CD4-positive, alpha-beta T cell (primary cell): ENCODE measurements at regions of chr20 and their contacts with region 1.

Region 1: GRCh38 chr20:32387252-32387651 is 29.1 kb downstream of the ASXL1 start:
- DNase-seq: peak in 8 of 14 experiments; percentile 4 to 86 (median 50)
- ATAC-seq: peak; percentile 96
- H3K4me3 ChIP-seq: no peak overlapping the region
- H3K4me3 Mint-ChIP-seq: peak overlapping the region; percentile 36
- H3K27ac ChIP-seq: peak overlapping the region in 1 of 2 donors; percentile 15
- H3K27ac Mint-ChIP-seq: peak overlapping the region; percentile 82
- H3K4me1 ChIP-seq: peaks cover 32% of the 10 kb centered on the region
- H3K4me1 Mint-ChIP-seq: peaks cover 82% of the 10 kb centered on the region
- H3K27me3 ChIP-seq: no peaks in the 10 kb centered on the region
- H3K27me3 Mint-ChIP-seq: no peaks in the 10 kb centered on the region
- CTCF ChIP-seq: no peak

Region 2: DNA sequence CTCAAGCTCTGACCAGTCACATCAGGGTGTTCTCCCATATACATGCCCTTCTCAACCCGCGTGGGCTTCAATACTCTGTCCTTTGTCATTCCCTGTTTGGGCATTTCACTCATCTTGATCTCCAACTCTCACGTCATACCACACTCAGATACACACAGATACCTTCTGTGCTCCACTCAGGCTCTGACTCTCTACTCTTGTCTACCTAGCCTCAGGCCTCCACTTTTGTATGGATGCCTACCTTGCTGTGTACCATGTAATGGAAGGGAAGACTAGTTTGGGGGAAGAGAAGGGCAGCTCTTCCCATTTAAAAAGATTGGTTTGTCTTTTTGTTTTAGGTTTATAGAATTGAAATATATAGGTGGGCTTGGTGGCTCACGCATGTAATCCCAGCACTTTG is 19.4 kb after region 1 on chr20:
- CTCF ChIA-PET with region 1: no interaction called
- POLR2A ChIA-PET with region 1: interaction called, 3 read pairs
- intact Hi-C with region 1: loop called in 1 of 2 experiments (anchors 1 kb)
- DNase-seq: no peak
- ATAC-seq: no peak
- H3K4me3 ChIP-seq: no peak overlapping the region
- H3K4me3 Mint-ChIP-seq: peak overlapping the region; percentile 1
- H3K27ac ChIP-seq: peak overlapping the region; percentile 7 to 43
- H3K27ac Mint-ChIP-seq: peak overlapping the region; percentile 83
- H3K4me1 ChIP-seq: peaks cover 35% of the 10 kb centered on the region
- H3K4me1 Mint-ChIP-seq: peaks cover 73% of the 10 kb centered on the region
- H3K27me3 ChIP-seq: no peaks in the 10 kb centered on the region
- H3K27me3 Mint-ChIP-seq: no peaks in the 10 kb centered on the region
- CTCF ChIP-seq: no peak

Region 3: DNA sequence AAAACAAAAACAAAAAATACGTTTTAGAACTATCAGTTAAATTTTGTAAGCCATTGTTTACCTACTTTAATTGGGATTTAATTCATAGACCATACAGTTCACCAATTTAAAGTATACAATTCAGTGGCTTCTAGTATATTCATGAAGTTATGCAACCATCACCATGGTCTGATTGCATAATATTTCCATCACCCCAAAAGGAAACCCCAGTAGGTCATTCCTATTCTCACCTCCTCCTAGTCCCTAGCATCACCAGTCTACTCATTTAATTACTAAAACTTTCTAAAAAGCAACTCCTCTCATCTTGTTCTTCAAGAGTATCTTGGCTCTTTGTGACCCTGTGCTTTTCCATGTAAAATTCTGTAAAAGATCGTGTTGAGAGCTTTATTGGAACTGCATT is 31.1 kb after region 1 on chr20:
- CTCF ChIA-PET with region 1: no interaction called
- POLR2A ChIA-PET with region 1: interaction called, 4 read pairs
- intact Hi-C with region 1: loop called in 1 of 2 experiments (anchors 5 kb)
- DNase-seq: no peak
- ATAC-seq: no peak
- H3K4me3 ChIP-seq: no peak overlapping the region
- H3K4me3 Mint-ChIP-seq: peak overlapping the region; percentile 17
- H3K27ac ChIP-seq: no peak overlapping the region
- H3K27ac Mint-ChIP-seq: peak overlapping the region; percentile 4
- H3K4me1 ChIP-seq: peaks cover 14% of the 10 kb centered on the region
- H3K4me1 Mint-ChIP-seq: peaks cover 60% of the 10 kb centered on the region
- H3K27me3 ChIP-seq: no peaks in the 10 kb centered on the region
- H3K27me3 Mint-ChIP-seq: no peaks in the 10 kb centered on the region
- CTCF ChIP-seq: no peak

Region 4: DNA sequence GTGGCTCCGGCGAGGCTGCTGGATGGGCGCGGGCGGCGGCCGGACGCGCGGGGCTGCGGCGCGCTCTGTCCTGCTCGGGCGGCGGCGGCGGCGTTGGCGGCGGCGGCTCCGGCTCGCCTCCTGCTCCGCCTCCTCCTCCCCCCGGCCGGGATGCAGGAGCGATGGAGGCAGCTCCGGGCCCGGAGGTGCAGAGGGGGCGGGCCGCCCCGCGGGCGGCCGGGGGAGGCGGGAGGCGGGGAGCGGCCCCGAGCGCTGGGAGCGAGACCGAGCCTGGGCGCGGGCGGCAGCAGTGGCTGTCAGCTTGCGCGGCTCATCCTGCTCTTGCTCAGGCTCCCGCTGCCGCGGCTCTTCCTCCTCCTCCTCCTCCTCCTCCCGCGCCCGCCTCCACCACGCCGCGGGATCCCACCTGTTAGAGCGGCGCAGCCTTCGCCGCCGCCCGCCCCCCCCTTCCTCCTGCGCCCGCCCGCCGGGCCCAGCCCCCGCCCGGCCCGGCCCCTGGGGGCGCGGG is 197.8 kb after region 1 on chr20 and contains the start of gene NOL4L:
- CTCF ChIA-PET with region 1: no interaction called
- POLR2A ChIA-PET with region 1: no interaction called
- intact Hi-C with region 1: no loop called
- DNase-seq: peak in 13 of 14 experiments; percentile 14 to 75 (median 41)
- ATAC-seq: peak; percentile 38
- H3K4me3 ChIP-seq: peak within 1 kb of the TSS; percentile 62
- H3K4me3 Mint-ChIP-seq: peak within 1 kb of the TSS; percentile 100
- H3K27ac ChIP-seq: peak within 1 kb of the TSS in 1 of 2 donors; percentile 35
- H3K27ac Mint-ChIP-seq: peak within 1 kb of the TSS; percentile 95
- H3K4me1 ChIP-seq: peaks cover 41% of the 10 kb centered on the region
- H3K4me1 Mint-ChIP-seq: peaks cover 45% of the 10 kb centered on the region
- H3K27me3 ChIP-seq: no peaks in the 10 kb centered on the region
- H3K27me3 Mint-ChIP-seq: peaks cover 5% of the 10 kb centered on the region
- CTCF ChIP-seq: no peak
- total RNA-seq, gene NOL4L: 53.1 to 55.6 TPM